ENCODE measurements at regions of chr9 and their contacts with region 1.

Region 1: GRCh38 chr9:15785584-15785983 is 232.7 kb downstream of the CCDC171 start:
- DNase-seq: no peak
- ATAC-seq: no peak
- H3K4me3 ChIP-seq: no peak overlapping the region
- H3K27ac ChIP-seq: no peak overlapping the region
- H3K4me1 ChIP-seq: no peaks in the 10 kb centered on the region
- H3K27me3 ChIP-seq: no peaks in the 10 kb centered on the region
- CTCF ChIP-seq: no peak

Region 2: GRCh38 chr9:15722888-15723287 is 62.7 kb before region 1 on chr9:
- CTCF ChIA-PET with region 1: no interaction called
- POLR2A ChIA-PET with region 1: no interaction called
- in situ Hi-C with region 1: no loop called
- intact Hi-C with region 1: loop called (anchors 10 kb)
- DNase-seq: no peak
- ATAC-seq: no peak
- H3K4me3 ChIP-seq: no peak overlapping the region
- H3K27ac ChIP-seq: no peak overlapping the region
- H3K4me1 ChIP-seq: no peaks in the 10 kb centered on the region
- H3K27me3 ChIP-seq: no peaks in the 10 kb centered on the region
- CTCF ChIP-seq: no peak

Region 3: DNA sequence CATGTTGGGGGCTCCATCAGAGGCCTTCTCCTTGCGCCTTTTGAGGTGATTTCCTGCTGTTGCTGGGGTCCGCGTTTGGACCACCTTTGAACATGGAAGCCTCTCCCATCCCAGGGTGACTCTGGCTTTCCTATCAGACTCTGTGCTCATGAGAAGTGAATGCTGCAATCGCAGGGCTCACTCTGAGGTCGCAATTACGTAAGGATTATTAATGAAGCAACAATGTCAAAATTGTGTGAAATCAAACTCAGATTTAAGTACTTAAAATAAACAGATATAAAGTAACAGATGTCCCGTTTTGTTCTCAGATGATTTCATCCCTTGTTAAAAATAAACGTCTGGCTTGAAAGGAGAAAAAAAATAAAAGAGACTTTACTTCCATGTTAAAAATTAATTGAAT is 450.7 kb after region 1 on chr9:
- CTCF ChIA-PET with region 1: no interaction called
- POLR2A ChIA-PET with region 1: no interaction called
- in situ Hi-C with region 1: no loop called
- intact Hi-C with region 1: no loop called
- DNase-seq: no peak
- ATAC-seq: no peak
- H3K4me3 ChIP-seq: no peak overlapping the region
- H3K27ac ChIP-seq: no peak overlapping the region
- H3K4me1 ChIP-seq: no peaks in the 10 kb centered on the region
- H3K27me3 ChIP-seq: no peaks in the 10 kb centered on the region
- CTCF ChIP-seq: no peak